Prostate gland (tissue), 2 donors: ENCODE measurements at regions of chr1 and their contacts with region 1.

Region 1: GRCh38 chr1:117367047-117368018 is at the start of gene MAN1A2:
- DNase-seq: peak; percentile 93
- H3K4me3 ChIP-seq: peak within 1 kb of the TSS; percentile 77 to 96
- H3K27ac ChIP-seq: peak within 1 kb of the TSS; percentile 93 to 98
- H3K4me1 ChIP-seq: peaks cover 7% of the 10 kb centered on the region
- H3K27me3 ChIP-seq: no peaks in the 10 kb centered on the region
- CTCF ChIP-seq: no peak
- POLR2A ChIP-seq: peak; percentile 85
- total RNA-seq, gene MAN1A2: 43.8 to 63.6 TPM

Region 2: GRCh38 chr1:117093870-117094621 is 273.3 kb before region 1 on chr1:
- intact Hi-C with region 1: loop called (anchors 10 kb)
- DNase-seq: no peak
- H3K4me3 ChIP-seq: no peak overlapping the region
- H3K27ac ChIP-seq: peak overlapping the region in 1 of 2 donors; percentile 45
- H3K4me1 ChIP-seq: no peaks in the 10 kb centered on the region
- H3K27me3 ChIP-seq: no peaks in the 10 kb centered on the region
- CTCF ChIP-seq: peak in 1 of 4 experiments; percentile 23
- POLR2A ChIP-seq: no peak

Region 3: GRCh38 chr1:117121776-117122697 is 245.3 kb before region 1 on chr1:
- intact Hi-C with region 1: loop called (anchors 10 kb)
- DNase-seq: peak; percentile 96
- H3K4me3 ChIP-seq: peak overlapping the region; percentile 48 to 63
- H3K27ac ChIP-seq: peak overlapping the region; percentile 81 to 85
- H3K4me1 ChIP-seq: no peaks in the 10 kb centered on the region
- H3K27me3 ChIP-seq: no peaks in the 10 kb centered on the region
- CTCF ChIP-seq: peak; percentile 48 to 87 (median 66)
- POLR2A ChIP-seq: no peak

Region 4: DNA sequence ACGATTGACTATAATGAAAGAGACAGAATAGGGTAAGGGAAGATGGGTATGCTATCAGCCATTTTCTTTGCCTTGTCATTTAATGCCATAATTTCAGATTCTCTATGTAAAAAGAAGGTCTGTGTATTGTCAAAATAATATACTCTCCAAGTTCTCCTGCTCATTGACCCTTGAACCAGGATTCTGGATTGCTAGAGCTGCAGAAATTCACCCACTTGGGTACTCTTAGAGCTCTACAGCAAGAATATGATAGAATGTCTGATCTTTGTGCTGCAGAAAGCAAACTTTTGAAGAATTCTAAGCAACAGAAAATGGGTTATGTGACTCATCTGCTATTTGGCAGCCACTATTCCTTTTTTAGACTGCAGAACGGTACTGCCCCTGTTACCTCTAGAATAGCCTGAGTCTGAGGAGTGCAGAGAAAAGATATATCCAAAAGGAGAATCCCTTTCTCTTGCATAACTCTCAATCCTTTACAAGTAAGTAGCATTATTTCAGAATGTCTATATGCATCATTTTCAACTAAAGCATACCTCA is 160.3 kb after region 1 on chr1:
- intact Hi-C with region 1: no loop called
- DNase-seq: no peak
- H3K4me3 ChIP-seq: no peak overlapping the region
- H3K27ac ChIP-seq: no peak overlapping the region
- H3K4me1 ChIP-seq: no peaks in the 10 kb centered on the region
- H3K27me3 ChIP-seq: no peaks in the 10 kb centered on the region
- CTCF ChIP-seq: no peak
- POLR2A ChIP-seq: no peak

Region 5: GRCh38 chr1:117605774-117606648 is 238.7 kb after region 1 on chr1 and contains the start of gene TENT5C:
- intact Hi-C with region 1: loop called (anchors 2 kb)
- DNase-seq: peak; percentile 99
- H3K4me3 ChIP-seq: peak within 1 kb of the TSS; percentile 75 to 81
- H3K27ac ChIP-seq: peak within 1 kb of the TSS; percentile 92 to 93
- H3K4me1 ChIP-seq: peaks cover 9% of the 10 kb centered on the region
- H3K27me3 ChIP-seq: no peaks in the 10 kb centered on the region
- CTCF ChIP-seq: peak in 2 of 4 experiments; percentile 7 to 10
- POLR2A ChIP-seq: peak; percentile 86
- total RNA-seq, gene TENT5C: 23.1 to 28.7 TPM